Transverse colon (tissue), 4 donors: ENCODE measurements at regions of chr17 and their contacts with region 1.

Region 1: DNA sequence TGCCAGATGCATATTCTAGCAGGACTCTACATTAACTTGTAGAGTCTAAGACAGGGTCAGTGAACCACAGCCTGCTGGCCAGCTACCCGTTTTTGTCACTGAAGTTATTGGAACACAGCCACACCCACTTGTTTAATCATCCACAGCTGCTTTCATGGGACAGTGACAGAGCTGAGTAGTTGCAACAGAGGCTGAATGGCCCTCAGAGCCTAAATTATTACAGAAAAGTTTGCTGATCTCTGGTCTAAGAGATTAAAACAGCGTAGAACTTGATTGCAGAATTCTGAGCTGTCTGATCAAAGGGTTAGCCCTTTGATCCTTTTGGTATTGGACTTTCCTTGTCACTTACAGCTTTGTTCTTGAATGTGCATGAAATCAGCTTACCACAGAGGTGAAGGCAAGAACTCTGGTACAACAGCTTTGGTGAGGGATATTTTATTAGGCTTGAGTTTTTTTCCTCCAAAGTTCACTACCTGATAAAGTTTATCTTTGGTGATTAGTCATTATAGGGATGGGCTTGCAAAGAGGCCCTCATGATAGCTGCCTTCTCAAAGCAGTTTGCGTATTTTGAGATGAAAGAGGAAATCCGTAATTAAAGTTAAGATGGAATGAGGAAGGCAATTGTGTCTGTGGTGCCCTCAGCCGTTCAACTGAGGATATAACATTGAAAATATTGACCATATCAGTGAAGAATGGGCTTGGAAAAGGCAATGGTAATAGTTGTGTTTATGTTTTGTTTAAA is 23.6 kb downstream of the ALDH3A2 start:
- DNase-seq: peak; percentile 56
- H3K4me3 ChIP-seq: no peak overlapping the region
- H3K27ac ChIP-seq: peak overlapping the region; percentile 44 to 65 (median 64)
- H3K4me1 ChIP-seq: peaks cover 0 to 29% (median 9%) of the 10 kb centered on the region in 4 donors
- H3K27me3 ChIP-seq: no peaks in the 10 kb centered on the region
- CTCF ChIP-seq: peak in 3 of 5 experiments; percentile 19 to 45 (median 26)
- EP300 ChIP-seq: no peak
- POLR2A ChIP-seq: no peak

Region 2: GRCh38 chr17:18626152-18626870 is 1045.9 kb before region 1 on chr17:
- in situ Hi-C with region 1: no loop called
- intact Hi-C with region 1: no loop called
- DNase-seq: no peak
- H3K4me3 ChIP-seq: peak overlapping the region in 1 of 4 donors; percentile 10
- H3K27ac ChIP-seq: no peak overlapping the region
- H3K4me1 ChIP-seq: peaks cover 0 to 5% (median 0%) of the 10 kb centered on the region in 4 donors
- H3K27me3 ChIP-seq: no peaks in the 10 kb centered on the region
- CTCF ChIP-seq: no peak
- EP300 ChIP-seq: no peak
- POLR2A ChIP-seq: no peak

Region 3: DNA sequence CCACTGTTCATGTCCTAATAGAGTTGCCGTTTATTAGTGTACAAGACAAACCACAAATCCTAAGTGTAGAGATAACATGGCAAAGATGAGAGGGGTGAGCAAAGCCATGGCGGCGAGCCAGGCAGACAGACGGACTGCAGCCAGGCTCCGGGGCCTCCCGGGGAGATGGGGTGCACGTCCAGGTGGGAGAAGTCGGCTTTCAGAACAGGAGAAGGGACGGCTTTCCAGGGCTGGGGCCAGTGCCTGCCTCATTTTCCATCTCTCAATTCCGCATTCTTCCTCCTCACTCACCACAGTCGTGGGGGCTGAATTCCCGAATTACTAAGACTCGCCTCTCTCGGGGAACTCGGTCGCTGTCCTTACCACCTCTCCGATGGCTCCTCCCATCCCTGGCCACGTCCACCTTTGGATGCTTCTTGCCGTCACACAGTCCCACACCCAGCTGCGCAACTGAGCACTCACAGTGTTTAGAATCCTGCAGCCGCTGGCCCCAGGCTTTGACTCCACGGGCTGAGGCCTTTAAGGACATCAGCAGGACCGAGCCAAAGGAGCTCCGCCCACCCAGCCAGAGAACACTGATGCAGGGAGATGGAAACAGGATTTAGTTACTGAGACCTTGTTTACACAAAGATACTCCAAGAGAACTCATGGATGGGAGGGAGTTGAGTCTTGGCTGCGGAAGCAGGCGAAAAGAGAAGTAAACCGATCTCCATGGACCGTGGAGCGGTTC is 201.5 kb before region 1 on chr17:
- in situ Hi-C with region 1: no loop called
- intact Hi-C with region 1: no loop called
- DNase-seq: peak; percentile 63
- H3K4me3 ChIP-seq: peak overlapping the region in 2 of 4 donors; percentile 0 to 14
- H3K27ac ChIP-seq: peak overlapping the region; percentile 72 to 86 (median 82)
- H3K4me1 ChIP-seq: peaks cover 0 to 6% (median 0%) of the 10 kb centered on the region in 4 donors
- H3K27me3 ChIP-seq: no peaks in the 10 kb centered on the region
- CTCF ChIP-seq: no peak
- EP300 ChIP-seq: no peak
- POLR2A ChIP-seq: no peak

Region 4: DNA sequence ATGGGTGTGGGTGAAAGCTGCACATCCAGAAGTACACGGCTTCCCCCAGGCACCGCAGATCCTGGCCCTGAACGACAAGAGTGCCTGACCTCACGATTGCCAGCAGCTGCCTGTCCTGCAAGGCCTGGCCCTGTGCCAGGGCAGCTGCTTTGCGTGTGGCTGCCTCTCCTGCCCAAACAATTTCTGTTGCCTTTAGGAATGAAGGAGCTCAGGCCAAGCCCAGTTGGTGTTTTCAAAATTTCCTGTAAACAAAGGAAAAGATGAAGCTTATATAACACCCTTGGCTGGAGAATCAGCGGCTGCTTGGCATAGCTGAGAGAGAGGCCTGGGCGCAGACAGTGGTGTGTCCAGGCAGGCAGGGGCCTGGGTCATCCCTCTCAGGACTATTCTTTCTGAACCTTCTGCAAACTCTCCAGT is 55.9 kb after region 1 on chr17:
- in situ Hi-C with region 1: loop called in 1 of 4 experiments (anchors 10 kb)
- intact Hi-C with region 1: no loop called
- DNase-seq: peak; percentile 80
- H3K4me3 ChIP-seq: no peak overlapping the region
- H3K27ac ChIP-seq: peak overlapping the region; percentile 84 to 95 (median 87)
- H3K4me1 ChIP-seq: peaks cover 25 to 50% (median 36%) of the 10 kb centered on the region in 4 donors
- H3K27me3 ChIP-seq: no peaks in the 10 kb centered on the region
- CTCF ChIP-seq: no peak
- EP300 ChIP-seq: no peak
- POLR2A ChIP-seq: no peak